Transverse colon (tissue), 4 donors: ENCODE measurements at regions of chr6 and their contacts with region 1.

Region 1: GRCh38 chr6:41591859-41592502 is 45.8 kb downstream of the FOXP4 start:
- DNase-seq: peak; percentile 77
- H3K4me3 ChIP-seq: no peak overlapping the region
- H3K27ac ChIP-seq: no peak overlapping the region
- H3K4me1 ChIP-seq: no peaks in the 10 kb centered on the region
- H3K27me3 ChIP-seq: no peaks in the 10 kb centered on the region
- CTCF ChIP-seq: peak; percentile 91 to 95 (median 94)
- EP300 ChIP-seq: no peak
- POLR2A ChIP-seq: no peak

Region 2: GRCh38 chr6:41367700-41368099 is 224.3 kb before region 1 on chr6:
- in situ Hi-C with region 1: loop called in 2 of 4 experiments (anchors 10 kb)
- intact Hi-C with region 1: loop called (anchors 5 kb)
- DNase-seq: peak; percentile 33
- H3K4me3 ChIP-seq: no peak overlapping the region
- H3K27ac ChIP-seq: no peak overlapping the region
- H3K4me1 ChIP-seq: peaks cover 6 to 20% (median 18%) of the 10 kb centered on the region in 4 donors
- H3K27me3 ChIP-seq: peaks cover 84% of the 10 kb centered on the region
- CTCF ChIP-seq: peak; percentile 23 to 52 (median 45)
- EP300 ChIP-seq: no peak
- POLR2A ChIP-seq: no peak

Region 3: GRCh38 chr6:41424370-41425058 is 167.5 kb before region 1 on chr6:
- in situ Hi-C with region 1: loop called in 3 of 4 experiments (anchors 10 to 25 kb)
- intact Hi-C with region 1: loop called (anchors 5 kb)
- DNase-seq: peak; percentile 89
- H3K4me3 ChIP-seq: no peak overlapping the region
- H3K27ac ChIP-seq: no peak overlapping the region
- H3K4me1 ChIP-seq: peaks cover 13 to 33% (median 25%) of the 10 kb centered on the region in 4 donors
- H3K27me3 ChIP-seq: peaks cover 14% of the 10 kb centered on the region
- CTCF ChIP-seq: peak; percentile 83 to 90 (median 89)
- EP300 ChIP-seq: no peak
- POLR2A ChIP-seq: no peak

Region 4: DNA sequence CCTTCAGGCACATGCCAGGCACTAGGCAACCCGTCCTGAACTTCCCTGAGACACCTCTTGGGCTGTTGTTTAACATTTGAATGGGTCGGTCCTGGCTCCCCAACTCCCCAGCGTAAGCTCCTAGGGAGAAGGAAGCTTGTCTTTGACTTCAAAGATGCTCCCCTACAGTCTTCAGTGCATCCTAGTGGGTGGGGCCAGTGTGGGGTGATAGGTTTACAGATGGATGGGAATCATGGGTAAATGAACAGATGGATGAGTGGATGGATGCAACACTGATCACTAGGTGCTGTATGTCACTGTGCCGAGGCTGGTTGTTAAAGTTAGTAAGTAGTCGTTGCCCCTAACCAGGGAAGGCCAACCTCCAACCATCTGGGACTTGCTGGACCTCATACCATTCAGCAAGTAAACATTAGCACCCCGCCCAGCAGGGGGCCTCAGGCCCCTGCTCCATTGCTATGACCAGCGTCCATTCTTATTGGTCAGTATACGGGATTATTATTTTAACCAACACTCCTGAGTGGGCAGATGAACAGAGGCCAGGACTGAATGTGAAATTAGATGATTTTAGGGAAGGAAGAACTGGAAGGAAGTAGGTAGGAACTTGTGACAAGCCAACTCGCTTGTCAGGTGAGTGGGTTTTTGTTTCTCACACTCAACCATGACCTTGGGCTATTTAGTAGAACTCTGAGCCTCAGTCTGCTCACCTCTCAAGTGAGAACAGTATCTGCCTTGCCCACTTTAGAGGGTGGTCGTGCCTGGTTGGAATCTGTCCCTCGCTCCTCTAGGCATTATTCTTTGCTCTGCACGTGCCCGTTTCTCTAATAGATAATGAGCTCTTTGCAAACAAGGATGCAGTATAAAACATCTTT is 128.7 kb before region 1 on chr6:
- in situ Hi-C with region 1: loop called in 3 of 4 experiments (anchors 10 kb)
- intact Hi-C with region 1: loop called (anchors 5 kb)
- DNase-seq: peak; percentile 64
- H3K4me3 ChIP-seq: no peak overlapping the region
- H3K27ac ChIP-seq: no peak overlapping the region
- H3K4me1 ChIP-seq: no peaks in the 10 kb centered on the region
- H3K27me3 ChIP-seq: no peaks in the 10 kb centered on the region
- CTCF ChIP-seq: peak; percentile 49 to 63 (median 51)
- EP300 ChIP-seq: no peak
- POLR2A ChIP-seq: no peak

Region 5: DNA sequence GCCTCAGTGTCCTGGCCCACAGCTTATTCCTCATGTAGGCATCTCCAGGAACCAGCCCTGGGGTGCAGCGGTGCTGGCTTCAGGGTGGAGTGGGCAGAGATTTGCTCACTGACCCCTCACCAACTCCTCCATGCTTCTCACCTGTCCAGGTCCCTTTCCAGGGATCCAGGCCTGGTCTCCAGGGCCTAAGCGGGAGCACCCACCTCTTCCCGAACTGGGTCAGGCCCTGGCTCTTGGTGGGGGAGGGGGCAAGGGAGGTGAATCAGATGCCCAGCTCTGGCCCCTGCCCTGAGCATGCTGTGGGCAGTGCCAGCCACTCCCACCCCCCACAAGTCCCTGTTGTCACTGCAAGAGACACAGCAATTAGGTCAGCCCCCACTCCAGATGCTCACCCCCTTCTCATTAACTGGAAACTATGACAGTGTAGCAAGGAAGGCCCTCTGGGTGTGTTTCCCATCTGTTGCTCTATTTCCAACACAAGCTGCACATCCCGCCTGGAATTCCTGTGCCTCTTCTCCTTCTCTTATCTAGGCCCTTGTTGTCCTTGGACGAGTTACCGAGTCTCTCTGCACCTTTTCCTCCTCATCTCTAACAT is 83.3 kb after region 1 on chr6:
- in situ Hi-C with region 1: loop called in 1 of 4 experiments (anchors 10 kb)
- intact Hi-C with region 1: no loop called
- DNase-seq: no peak
- H3K4me3 ChIP-seq: no peak overlapping the region
- H3K27ac ChIP-seq: no peak overlapping the region
- H3K4me1 ChIP-seq: no peaks in the 10 kb centered on the region
- H3K27me3 ChIP-seq: no peaks in the 10 kb centered on the region
- CTCF ChIP-seq: no peak
- EP300 ChIP-seq: no peak
- POLR2A ChIP-seq: no peak